ENCODE measurements at regions of chr21 and their contacts with region 1.

Region 1: GRCh38 chr21:33127154-33127893 is 57.4 kb downstream of the OLIG1 start:
- H3K4me3 ChIP-seq: peak overlapping the region; percentile 11
- H3K27ac ChIP-seq: no peak overlapping the region
- H3K4me1 ChIP-seq: no peaks in the 10 kb centered on the region
- CTCF ChIP-seq: peak; percentile 84

Region 2: GRCh38 chr21:32834916-32835235 is 292.4 kb before region 1 on chr21:
- CTCF ChIA-PET with region 1: interaction called, 24 read pairs
- POLR2A ChIA-PET with region 1: no interaction called
- H3K4me3 ChIP-seq: no peak overlapping the region
- H3K27ac ChIP-seq: no peak overlapping the region
- H3K4me1 ChIP-seq: no peaks in the 10 kb centered on the region
- CTCF ChIP-seq: no peak

Region 3: GRCh38 chr21:32949701-32950100 is 177.6 kb before region 1 on chr21:
- CTCF ChIA-PET with region 1: interaction called, 18 read pairs
- POLR2A ChIA-PET with region 1: no interaction called
- H3K4me3 ChIP-seq: no peak overlapping the region
- H3K27ac ChIP-seq: no peak overlapping the region
- H3K4me1 ChIP-seq: no peaks in the 10 kb centered on the region
- CTCF ChIP-seq: no peak

Region 4: GRCh38 chr21:33007747-33008146 is 119.6 kb before region 1 on chr21:
- CTCF ChIA-PET with region 1: interaction called, 16 read pairs
- POLR2A ChIA-PET with region 1: no interaction called
- H3K4me3 ChIP-seq: no peak overlapping the region
- H3K27ac ChIP-seq: no peak overlapping the region
- H3K4me1 ChIP-seq: peaks cover 6% of the 10 kb centered on the region; the same call in 1 of the 2 replicates
- CTCF ChIP-seq: no peak

Region 5: DNA sequence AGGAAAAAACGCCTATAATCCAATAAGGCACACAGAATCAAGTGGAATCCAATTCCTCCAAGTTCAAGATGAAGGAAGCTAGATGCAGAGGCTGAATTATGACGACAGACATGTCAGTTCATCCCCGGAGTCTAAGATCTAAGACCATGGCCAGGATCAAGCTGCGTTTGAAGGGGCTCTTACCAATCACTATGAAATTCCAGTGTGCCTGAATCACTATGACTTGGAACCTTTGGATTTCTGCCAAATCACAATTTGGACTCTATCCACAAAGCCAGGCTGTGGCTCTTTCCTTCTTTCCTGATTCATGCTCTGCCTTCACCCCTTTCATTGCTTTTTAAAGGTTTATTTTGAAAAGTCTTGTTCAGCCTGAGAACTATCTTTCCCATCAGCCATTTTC is 84.5 kb before region 1 on chr21:
- CTCF ChIA-PET with region 1: interaction called, 11 read pairs
- POLR2A ChIA-PET with region 1: no interaction called
- H3K4me3 ChIP-seq: no peak overlapping the region
- H3K27ac ChIP-seq: no peak overlapping the region
- H3K4me1 ChIP-seq: peaks cover 3% of the 10 kb centered on the region; the same call in 1 of the 2 replicates
- CTCF ChIP-seq: no peak